Left cardiac atrium (tissue), 4 donors: ENCODE measurements at regions of chr17 and their contacts with region 1.

Region 1: GRCh38 chr17:46044286-46044928 is 45.4 kb downstream of the STH start:
- DNase-seq: peak; percentile 74
- ATAC-seq: peak; percentile 85 to 87

Region 2: GRCh38 chr17:45341533-45342158 is 702.8 kb before region 1 on chr17:
- intact Hi-C with region 1: no loop called
- DNase-seq: peak; percentile 86
- ATAC-seq: peak; percentile 53 to 76

Region 3: DNA sequence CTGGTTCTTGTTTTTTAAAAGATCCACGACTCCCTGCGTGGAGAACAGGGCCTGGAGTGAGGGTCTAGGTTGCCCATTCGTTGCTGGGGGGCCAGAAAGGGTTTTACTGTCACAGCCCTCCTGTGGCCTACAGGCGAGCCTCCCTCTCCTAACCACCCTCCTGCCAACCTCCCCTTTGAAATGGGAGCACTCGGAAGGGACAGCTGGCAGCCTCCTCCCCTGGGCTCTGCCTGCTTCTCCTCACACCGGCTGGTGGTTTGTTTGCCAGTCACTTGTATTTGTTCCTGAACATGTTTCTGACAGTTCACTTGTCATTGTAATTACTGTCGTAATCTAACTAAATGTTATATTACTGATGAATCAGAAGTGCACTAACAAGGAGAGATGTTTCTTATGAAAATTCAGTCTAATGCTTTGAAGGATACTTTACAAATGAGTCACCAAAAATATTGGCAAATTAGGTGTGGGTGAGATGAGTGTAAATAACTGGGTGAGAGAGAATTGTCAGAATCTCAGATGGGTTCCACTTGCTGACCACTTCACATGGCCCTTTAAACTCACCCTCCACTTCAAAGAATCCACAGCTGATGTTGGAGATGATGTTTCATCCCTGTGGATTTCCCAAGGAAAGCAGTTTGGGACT is 202.4 kb before region 1 on chr17:
- intact Hi-C with region 1: no loop called
- DNase-seq: no peak
- ATAC-seq: no peak

Region 4: GRCh38 chr17:45923511-45924268 is 120.7 kb before region 1 on chr17:
- intact Hi-C with region 1: no loop called
- DNase-seq: no peak
- ATAC-seq: peak in 1 of 2 donors; percentile 37

Region 5: GRCh38 chr17:46193626-46194392 is 149.4 kb after region 1 on chr17:
- intact Hi-C with region 1: loop called (anchors 1 to 10 kb)
- DNase-seq: peak; percentile 99
- ATAC-seq: peak; percentile 94 to 96

Region 6: DNA sequence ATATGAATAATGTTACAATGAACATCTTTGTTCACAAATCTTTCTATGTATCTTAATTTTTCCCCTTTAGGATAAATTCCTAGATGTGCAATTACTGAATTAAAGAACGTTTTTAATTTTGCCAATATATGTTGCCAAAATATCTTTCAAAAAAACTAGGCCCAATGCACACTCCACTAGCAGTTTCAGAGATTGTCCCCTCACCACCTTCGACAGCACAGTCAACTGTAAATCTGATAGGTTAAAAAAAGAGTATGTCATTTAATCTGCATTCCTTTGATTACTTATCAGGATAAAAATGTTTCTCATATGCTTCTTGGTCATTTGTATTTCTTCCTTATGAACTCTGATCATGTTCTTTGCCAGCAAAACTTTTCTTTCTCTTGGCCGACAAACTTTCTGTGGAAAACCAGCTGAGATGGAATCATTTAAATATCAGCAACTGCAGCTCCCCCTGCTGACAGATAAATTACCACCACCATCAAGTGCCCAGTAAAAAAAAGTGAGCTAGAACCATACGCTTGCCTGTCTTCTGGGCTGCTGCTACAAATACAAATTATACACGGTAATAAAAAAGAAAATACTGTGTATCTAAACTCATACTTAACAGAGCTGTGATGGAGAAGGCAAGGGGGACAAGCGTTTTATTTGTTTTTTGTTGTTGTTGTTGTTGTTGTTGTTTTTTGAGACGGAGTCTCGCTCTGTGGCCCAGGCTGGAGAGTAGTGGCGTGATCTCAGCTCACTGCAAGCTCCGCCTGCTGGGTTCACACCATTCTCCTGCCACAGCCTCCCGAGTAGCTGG is 168.4 kb after region 1 on chr17:
- intact Hi-C with region 1: loop called in 1 of 2 experiments (anchors 2 kb)
- DNase-seq: peak; percentile 69
- ATAC-seq: peak; percentile 68 to 86